H1 (cell line): ENCODE measurements at regions of chr21 and their contacts with region 1.

Region 1: DNA sequence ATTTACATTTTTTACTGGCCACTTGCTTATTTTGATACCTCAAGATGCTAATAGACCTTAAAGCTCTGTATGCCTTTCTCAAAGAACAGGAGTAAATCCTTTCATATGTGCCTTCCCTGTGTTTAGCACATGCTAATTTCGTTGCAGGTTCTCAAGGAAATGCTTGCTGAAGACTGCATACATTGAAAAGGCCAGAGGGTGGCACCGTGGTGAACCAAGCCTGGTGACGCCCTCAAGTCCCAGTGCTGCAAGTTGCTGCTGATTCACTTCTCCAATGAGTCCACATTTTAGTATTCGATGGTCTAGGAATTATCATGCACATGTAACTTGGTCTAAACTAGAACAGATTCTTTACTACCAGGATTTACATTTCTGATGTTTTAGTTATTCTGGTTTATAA is 94.1 kb downstream of the CLDN17 start:
- DNase-seq: peak in 1 of 2 experiments; percentile 68
- H3K4me3 ChIP-seq: no peak overlapping the region
- H3K27ac ChIP-seq: no peak overlapping the region
- H3K4me1 ChIP-seq: peaks cover 0 to 3% (median 0%) of the 10 kb centered on the region in 4 experiments; a peak in 1 of 7 replicates
- H3K27me3 ChIP-seq: no peaks in the 10 kb centered on the region
- CTCF ChIP-seq: peak; percentile 60 to 71 (median 65)
- EP300 ChIP-seq: no peak
- POLR2A ChIP-seq: no peak
- RAD21 ChIP-seq: peak; percentile 67

Region 2: GRCh38 chr21:30083225-30083945 is 10.9 kb after region 1 on chr21:
- CTCF ChIA-PET with region 1: interaction called, 13 read pairs
- POLR2A ChIA-PET with region 1: interaction called, 3 read pairs
- DNase-seq: peak in 1 of 2 experiments; percentile 61
- H3K4me3 ChIP-seq: peak overlapping the region in 1 of 4 experiments; percentile 32; a peak in 1 of 8 replicates
- H3K27ac ChIP-seq: peak overlapping the region; percentile 51; the same call in 1 of the 2 replicates
- H3K4me1 ChIP-seq: peaks cover 0 to 10% (median 7%) of the 10 kb centered on the region in 4 experiments; a peak in 5 of 7 replicates
- H3K27me3 ChIP-seq: no peaks in the 10 kb centered on the region
- CTCF ChIP-seq: no peak
- EP300 ChIP-seq: no peak
- POLR2A ChIP-seq: 0 out of 3 replicates have a peak, but pooled peaks of 1 of the 2 experiments have one; percentile 46
- RAD21 ChIP-seq: no peak